ENCODE measurements at regions of chr1 and their contacts with region 1.

Region 1: GRCh38 chr1:111222308-111223125 is 5.0 kb upstream of the CHI3L2 start:
- DNase-seq: peak; percentile 69
- H3K4me3 Mint-ChIP-seq: peak overlapping the region; percentile 78
- H3K27ac Mint-ChIP-seq: peak overlapping the region; percentile 98
- H3K4me1 Mint-ChIP-seq: peaks cover 93% of the 10 kb centered on the region
- H3K27me3 Mint-ChIP-seq: no peaks in the 10 kb centered on the region

Region 2: GRCh38 chr1:110963691-110964399 is 258.7 kb before region 1 on chr1 and contains the start of gene LRIF1:
- intact Hi-C with region 1: loop called (anchors 5 kb)
- DNase-seq: peak; percentile 100
- H3K4me3 Mint-ChIP-seq: peak within 1 kb of the TSS; percentile 90
- H3K27ac Mint-ChIP-seq: peak within 1 kb of the TSS; percentile 96
- H3K4me1 Mint-ChIP-seq: peaks cover 43% of the 10 kb centered on the region
- H3K27me3 Mint-ChIP-seq: peaks cover 2% of the 10 kb centered on the region
- total RNA-seq, gene LRIF1: 13.8 and 14.8 TPM in 2 replicates

Region 3: DNA sequence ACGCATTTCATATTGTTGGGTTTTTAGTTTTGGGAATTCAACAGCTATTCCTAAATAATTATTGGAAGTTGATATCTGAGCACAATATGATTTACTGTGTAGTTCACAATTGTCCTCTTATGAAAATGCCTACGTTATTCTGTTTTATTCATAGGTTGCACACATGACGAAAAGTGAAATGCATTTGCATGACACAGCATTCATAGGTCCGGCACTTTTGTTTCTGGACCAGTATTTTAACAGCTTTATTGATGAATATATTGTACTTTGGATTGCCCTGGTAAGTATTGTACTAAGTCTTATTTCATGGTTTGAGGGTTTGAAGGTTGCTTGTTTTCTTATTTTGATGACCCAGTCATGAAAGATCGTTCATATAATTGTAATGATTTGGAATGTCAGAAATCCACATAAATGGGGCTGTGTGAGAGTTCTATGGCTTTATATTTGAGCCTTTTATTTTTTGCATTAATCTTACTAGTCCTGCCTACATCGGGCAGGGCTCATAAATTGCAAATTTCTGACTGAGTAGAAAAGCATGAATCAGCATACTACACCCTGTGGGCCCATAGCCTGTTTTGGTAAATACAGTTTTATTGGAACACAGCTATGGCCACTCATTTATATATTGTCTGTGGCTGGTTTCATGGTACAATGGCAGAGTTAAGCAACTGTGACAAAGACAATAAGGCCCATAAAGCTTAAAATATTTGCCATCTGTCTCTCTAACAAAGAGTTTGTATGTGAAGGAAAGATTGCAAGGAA is 39.0 kb before region 1 on chr1:
- intact Hi-C with region 1: loop called (anchors 5 kb)
- DNase-seq: no peak
- H3K4me3 Mint-ChIP-seq: no peak overlapping the region
- H3K27ac Mint-ChIP-seq: no peak overlapping the region
- H3K4me1 Mint-ChIP-seq: peaks cover 41% of the 10 kb centered on the region
- H3K27me3 Mint-ChIP-seq: no peaks in the 10 kb centered on the region

Region 4: DNA sequence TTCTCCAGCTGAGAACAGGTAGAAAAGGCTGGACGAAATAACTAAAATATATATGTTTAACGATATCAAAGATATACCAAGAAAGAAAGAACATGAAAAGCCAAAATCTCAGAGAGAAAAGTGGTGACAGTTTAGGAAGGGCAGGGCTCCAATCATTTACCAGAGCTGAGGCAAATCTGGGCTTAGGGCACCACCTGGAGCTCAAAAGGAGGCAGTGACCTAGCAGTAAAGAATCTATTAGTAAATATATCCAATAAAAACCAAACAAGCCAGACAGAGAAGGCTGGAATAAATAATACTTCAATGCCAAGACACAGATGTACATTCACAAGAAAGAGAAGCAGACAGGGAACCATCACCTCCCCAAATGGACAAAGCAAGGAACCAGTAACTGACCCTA is 111.7 kb after region 1 on chr1:
- intact Hi-C with region 1: loop called (anchors 1 kb)
- DNase-seq: peak; percentile 32
- H3K4me3 Mint-ChIP-seq: no peak overlapping the region
- H3K27ac Mint-ChIP-seq: no peak overlapping the region
- H3K4me1 Mint-ChIP-seq: peaks cover 5% of the 10 kb centered on the region
- H3K27me3 Mint-ChIP-seq: peaks cover 3% of the 10 kb centered on the region

Region 5: DNA sequence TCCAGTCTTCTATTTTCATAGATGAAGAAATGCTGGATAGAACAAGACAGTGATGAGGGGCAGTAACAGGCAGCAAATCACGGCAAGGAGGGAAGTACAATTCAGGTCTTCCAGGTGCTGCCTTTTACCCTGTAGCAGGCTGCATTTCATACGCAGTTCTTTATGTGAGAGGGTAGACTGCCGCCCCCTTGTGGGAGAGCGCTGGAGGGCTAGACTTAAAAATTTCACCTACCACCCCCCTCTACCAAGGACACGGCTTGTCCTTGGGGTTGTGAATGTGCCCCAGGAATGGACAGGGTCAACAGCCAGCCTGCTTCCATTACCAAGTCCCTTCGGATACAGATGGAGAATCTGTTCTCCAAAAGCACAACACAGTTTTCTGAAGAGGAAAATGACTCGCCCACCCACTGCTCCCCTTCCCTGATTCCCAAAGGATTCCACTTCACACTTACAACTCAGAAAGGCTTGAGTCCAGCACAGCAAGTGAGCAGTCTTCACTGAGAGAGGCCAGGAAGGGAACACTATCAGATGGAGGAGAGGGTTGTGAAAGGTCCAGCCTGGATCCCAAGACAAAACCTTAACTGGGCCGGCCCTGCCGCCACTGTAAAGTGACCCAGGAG is 219.2 kb after region 1 on chr1:
- intact Hi-C with region 1: loop called (anchors 1 kb)
- DNase-seq: peak; percentile 34
- H3K4me3 Mint-ChIP-seq: no peak overlapping the region
- H3K27ac Mint-ChIP-seq: no peak overlapping the region
- H3K4me1 Mint-ChIP-seq: peaks cover 34% of the 10 kb centered on the region
- H3K27me3 Mint-ChIP-seq: no peaks in the 10 kb centered on the region

Region 6: GRCh38 chr1:111507411-111508201 is 285.1 kb after region 1 on chr1:
- intact Hi-C with region 1: loop called (anchors 5 kb)
- DNase-seq: peak; percentile 52
- H3K4me3 Mint-ChIP-seq: peak overlapping the region; percentile 72
- H3K27ac Mint-ChIP-seq: peak overlapping the region; percentile 83
- H3K4me1 Mint-ChIP-seq: peaks cover 58% of the 10 kb centered on the region
- H3K27me3 Mint-ChIP-seq: no peaks in the 10 kb centered on the region

Region 7: DNA sequence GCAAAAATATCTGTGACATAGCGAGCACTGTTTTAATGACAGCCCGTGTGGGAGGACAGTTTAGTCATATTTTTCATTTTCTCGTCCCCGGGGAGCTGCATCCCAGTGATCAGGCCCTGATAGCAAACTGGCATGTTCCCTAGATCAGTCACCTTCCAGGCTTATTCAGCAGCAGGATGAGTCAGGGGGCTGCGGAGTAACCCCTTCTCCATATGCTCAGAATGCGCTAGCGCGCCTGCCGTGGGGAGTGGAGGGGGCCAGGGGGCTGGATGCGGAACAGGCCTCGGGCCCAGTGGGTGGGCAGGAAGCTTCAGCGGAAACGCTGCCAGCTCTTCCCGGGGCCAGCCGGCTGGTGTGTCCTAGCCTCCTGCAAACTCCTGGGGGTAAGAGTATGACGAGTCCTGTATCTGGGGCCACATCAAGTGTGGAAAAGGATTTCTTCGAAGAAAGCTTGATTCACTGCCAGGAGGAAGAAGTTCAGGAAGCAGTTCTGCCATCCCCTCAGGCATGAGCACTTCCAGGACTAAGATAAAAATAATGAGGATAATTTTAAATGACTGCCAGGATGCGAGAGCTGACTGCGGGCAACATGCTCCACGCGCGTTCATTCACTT is 673.1 kb after region 1 on chr1:
- intact Hi-C with region 1: no loop called
- DNase-seq: no peak
- H3K4me3 Mint-ChIP-seq: no peak overlapping the region
- H3K27ac Mint-ChIP-seq: no peak overlapping the region
- H3K4me1 Mint-ChIP-seq: no peaks in the 10 kb centered on the region
- H3K27me3 Mint-ChIP-seq: peaks cover 17% of the 10 kb centered on the region